AG04449 (cell line): ENCODE measurements at regions of chr6 and their contacts with region 1.

Region 1: DNA sequence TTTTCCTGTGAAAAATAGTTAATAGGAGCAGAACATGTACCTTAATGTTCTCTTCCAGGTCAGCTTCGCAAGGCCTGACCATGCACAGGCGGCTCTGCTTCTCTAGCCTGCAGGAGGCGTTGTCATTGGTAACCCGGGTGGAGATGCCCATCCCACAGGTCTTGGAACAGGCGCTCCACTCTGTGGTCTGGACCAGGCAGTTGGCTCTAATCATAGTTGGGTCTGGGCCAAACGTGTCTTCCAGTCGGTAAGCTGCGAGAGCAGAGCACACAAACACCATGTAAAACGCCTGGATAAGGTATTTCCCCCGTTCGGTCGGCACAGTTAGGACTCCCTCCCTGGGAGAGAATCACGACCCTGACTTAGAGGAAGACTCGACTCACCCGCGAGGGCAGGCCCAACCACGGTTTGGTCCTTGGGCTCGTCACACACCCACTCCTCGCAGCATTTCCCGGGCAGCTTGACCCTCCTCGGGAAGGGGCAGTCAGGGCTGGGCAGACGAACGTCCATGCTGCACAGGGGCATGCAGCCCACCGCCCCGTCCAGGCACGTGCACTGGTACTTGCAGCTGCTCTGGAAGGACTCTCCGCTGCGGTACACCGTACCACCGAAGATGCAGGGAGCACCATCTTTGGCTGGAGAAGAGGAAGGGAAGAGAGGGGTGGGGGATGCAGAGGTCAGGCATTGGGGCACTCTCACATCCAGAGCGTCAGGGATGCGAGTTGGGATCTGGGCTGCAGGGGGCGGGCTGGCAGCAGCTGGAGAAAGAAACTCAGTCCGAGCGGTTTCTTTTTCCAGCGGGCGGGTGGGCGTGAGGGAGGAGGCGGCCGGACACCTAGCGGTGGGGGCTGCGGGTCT is 1.0 kb downstream of the CCN2 start:
- DNase-seq: peak; percentile 79
- H3K4me3 ChIP-seq: peak overlapping the region; percentile 97
- CTCF ChIP-seq: peak; percentile 51

Region 2: GRCh38 chr6:131937703-131938631 is 12.2 kb before region 1 on chr6:
- CTCF ChIA-PET with region 1: interaction called, 4 read pairs
- POLR2A ChIA-PET with region 1: interaction called, 22 read pairs
- DNase-seq: peak; percentile 64
- H3K4me3 ChIP-seq: no peak overlapping the region
- CTCF ChIP-seq: no peak

Region 3: DNA sequence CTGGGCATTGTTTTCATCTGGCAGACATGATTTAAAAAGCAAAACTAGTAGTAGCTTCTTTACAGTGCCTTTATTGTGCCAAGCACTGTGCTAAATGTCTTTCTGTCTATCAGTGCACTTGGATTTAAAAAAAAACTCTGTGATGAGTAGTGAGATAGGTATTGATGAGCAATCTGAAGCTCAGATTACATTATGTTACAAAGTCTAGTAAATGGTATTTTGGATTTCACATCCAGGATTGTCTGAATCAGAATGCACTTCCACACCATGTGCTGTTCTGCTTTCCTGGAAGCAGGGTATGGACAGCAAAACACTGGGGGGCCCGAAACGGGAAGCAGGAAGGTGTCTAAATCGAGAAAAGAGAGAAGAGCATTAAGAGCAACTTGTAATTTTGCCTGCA is 104.4 kb after region 1 on chr6:
- CTCF ChIA-PET with region 1: interaction called, 3 read pairs
- POLR2A ChIA-PET with region 1: interaction called, 23 read pairs
- DNase-seq: no peak
- H3K4me3 ChIP-seq: no peak overlapping the region
- CTCF ChIP-seq: no peak

Region 4: DNA sequence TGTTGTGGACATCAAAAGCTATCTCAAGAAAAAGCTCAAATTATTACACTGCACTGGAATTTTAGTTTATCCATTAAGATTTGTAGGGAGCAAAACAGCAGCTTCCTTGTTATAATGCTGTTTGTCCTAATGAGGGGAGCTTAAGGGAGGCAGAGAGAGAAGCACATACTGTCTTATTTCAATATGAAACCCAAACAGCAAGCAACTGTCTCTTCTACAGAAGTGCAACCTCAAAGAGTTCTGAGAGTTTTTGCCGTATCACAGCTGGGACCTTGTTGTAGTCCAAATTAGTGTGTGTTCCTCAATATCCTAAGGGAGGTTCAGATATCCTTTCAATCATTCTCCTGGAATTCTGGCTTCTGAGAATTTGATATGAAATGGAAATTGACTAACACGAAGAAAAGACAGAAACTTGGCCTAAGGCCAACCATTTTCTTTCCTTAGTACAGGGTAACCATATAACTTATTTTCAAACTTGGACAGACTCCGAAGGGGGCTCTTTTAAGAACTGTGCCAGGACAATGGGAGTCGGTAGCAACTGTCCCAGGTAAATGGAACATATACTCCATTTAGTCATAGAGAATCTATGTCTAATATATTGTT is 150.4 kb after region 1 on chr6:
- CTCF ChIA-PET with region 1: no interaction called
- POLR2A ChIA-PET with region 1: interaction called, 10 read pairs
- DNase-seq: no peak
- H3K4me3 ChIP-seq: no peak overlapping the region
- CTCF ChIP-seq: no peak

Region 5: DNA sequence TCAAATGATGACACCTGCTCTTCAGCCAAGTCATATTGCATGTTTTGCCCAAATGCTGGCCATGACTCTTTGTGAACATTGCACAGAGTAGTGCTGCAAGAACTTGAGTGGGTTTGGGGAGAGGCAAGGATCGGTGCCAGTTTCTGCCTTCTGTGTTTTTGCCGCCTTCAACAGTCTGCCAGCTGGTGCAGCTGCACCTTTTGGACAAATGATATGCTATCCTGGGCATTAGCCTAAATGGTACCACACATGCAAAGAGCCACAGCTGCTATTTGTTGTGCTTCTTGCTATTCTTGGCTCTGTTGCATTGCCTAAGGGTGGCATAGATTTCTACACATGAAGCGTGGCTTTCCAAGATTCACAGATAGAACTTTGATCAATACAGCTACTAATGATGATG is 190.1 kb after region 1 on chr6:
- CTCF ChIA-PET with region 1: no interaction called
- POLR2A ChIA-PET with region 1: interaction called, 44 read pairs
- DNase-seq: no peak
- H3K4me3 ChIP-seq: no peak overlapping the region
- CTCF ChIP-seq: no peak

Region 6: GRCh38 chr6:132161283-132161682 is 211.1 kb after region 1 on chr6:
- CTCF ChIA-PET with region 1: interaction called, 4 read pairs
- POLR2A ChIA-PET with region 1: interaction called, 13 read pairs
- DNase-seq: no peak
- H3K4me3 ChIP-seq: no peak overlapping the region
- CTCF ChIP-seq: peak; percentile 49

Region 7: GRCh38 chr6:132236744-132237143 is 286.6 kb after region 1 on chr6:
- CTCF ChIA-PET with region 1: no interaction called
- POLR2A ChIA-PET with region 1: interaction called, 10 read pairs
- DNase-seq: no peak
- H3K4me3 ChIP-seq: no peak overlapping the region
- CTCF ChIP-seq: no peak